ENCODE measurements at regions of chr20 and their contacts with region 1.

Region 1: DNA sequence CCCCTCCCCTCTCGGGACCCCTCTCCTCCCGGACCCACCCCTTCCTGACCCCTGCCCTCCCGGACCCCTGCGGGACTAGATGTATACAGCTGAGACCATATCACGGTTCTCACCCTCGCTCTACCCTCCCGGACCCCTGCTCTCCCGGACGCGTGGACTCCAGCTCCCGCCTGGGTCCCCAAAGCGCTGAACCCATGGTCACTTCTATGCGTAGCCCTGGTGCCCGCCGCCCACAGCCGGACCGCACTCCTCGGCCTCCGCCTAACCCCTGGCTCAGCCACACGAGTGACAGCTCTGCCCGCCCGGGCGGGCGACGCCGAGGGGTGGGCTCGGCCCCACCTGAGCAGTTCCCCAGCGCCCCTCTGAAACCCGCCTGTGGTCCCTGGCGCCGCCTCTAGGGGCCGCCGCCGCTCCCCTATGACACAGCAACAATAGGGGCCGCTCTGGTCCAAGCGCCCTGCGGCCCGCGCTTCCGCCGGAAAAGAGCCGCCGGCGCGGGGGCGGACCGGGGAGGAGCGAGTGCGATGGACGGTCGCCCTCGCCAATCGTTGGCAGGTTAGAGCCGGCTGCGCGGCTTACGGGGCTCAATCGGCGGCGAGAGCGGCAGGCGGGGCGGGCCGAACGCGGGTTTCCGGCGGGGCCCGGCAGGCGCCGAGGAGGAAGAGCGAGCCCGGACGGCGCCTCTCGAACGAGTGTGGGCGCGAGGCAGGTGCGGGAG is at the start of gene ADRM1:
- DNase-seq: peak; percentile 97
- H3K4me3 Mint-ChIP-seq: peak within 1 kb of the TSS; percentile 98
- H3K27ac Mint-ChIP-seq: peak within 1 kb of the TSS; percentile 100
- H3K4me1 Mint-ChIP-seq: peaks cover 28% of the 10 kb centered on the region
- H3K27me3 Mint-ChIP-seq: no peaks in the 10 kb centered on the region
- total RNA-seq, gene ADRM1: 181 and 188 TPM in 2 replicates

Region 2: DNA sequence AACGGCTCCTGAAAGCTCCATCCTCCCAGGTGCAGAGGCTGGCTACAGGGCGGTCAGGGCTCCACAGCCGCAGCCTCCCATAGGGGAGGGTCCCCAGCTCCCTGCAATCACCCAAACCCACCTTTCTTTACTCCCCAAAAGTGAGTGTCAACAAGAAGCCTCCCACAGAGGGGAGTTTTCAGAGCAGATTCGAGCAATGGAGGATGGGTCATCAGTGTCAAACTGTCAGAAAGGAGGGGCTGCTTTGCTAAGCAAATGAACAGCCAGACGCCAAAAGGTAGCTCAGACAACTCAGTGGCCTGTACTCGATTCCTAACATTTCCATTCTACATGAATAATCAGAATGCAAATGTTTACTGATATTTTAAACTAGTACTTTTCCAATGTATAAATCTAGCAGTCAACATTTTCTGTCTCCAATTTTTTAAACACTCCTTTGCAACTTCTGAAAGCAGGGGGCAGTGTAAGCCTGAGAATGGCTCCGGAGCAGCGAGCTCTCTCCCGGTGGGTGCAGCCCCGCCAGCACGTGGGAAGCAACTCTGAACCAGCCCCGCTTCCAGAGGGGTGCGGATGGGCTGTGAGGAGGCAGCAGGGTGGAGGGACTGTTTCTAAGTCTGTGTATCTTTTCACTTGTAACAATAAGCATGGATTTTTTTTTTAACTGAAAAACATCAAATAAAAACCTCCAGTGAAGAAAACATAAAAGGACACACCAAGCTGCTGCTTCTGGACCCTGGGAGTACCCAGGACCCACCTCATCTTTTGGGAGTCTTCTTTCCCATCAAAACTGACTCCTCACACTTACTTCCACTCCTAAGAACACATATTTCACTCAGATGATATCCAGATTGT is 291.7 kb before region 1 on chr20:
- intact Hi-C with region 1: loop called (anchors 5 kb)
- DNase-seq: peak; percentile 34
- H3K4me3 Mint-ChIP-seq: no peak overlapping the region
- H3K27ac Mint-ChIP-seq: no peak overlapping the region
- H3K4me1 Mint-ChIP-seq: peaks cover 8% of the 10 kb centered on the region
- H3K27me3 Mint-ChIP-seq: no peaks in the 10 kb centered on the region

Region 3: GRCh38 chr20:62143118-62143973 is 159.2 kb before region 1 on chr20 and contains the starts of genes PSMA7 and SS18L1:
- intact Hi-C with region 1: loop called (anchors 2 kb)
- DNase-seq: peak; percentile 84
- H3K4me3 Mint-ChIP-seq: peak within 1 kb of the TSS; percentile 90
- H3K27ac Mint-ChIP-seq: peak within 1 kb of the TSS; percentile 91
- H3K4me1 Mint-ChIP-seq: peaks cover 39% of the 10 kb centered on the region
- H3K27me3 Mint-ChIP-seq: no peaks in the 10 kb centered on the region
- total RNA-seq, gene PSMA7: 444 and 450 TPM in 2 replicates
- total RNA-seq, gene SS18L1: 24.3 and 29.4 TPM in 2 replicates

Region 4: DNA sequence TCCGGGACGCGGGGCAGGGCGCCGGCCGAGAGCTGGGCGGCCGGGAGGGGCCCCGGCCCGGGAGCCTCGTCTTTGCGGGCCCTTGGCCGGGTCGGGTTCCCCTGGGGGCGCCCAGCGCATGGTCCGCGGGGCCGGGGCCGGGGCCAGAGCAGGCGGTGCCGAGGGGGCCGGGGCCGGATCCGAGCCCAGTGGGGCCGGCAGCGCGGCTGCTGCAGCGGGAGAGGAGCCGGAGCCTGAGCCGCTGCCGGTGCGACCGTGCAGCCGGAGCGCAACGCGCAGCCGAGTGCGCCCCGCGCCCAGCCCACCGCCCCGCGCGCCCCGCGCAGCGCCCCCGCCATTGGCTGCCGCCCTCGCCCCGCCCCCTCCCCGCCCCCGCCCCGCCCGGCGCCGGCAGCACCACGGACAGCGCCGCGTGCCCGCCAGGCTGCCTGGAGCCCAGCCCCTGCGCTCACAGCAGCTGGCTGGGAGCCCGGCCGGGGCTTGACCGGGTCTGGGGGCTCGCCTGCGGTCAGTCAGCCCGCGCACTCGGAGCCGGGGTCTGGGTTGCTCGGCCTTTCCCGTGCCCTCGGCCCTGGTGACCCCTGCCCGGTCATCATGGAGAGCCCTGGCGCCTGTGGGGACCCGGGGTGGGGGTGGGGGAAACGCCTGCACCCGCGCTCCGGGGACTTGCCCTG is 82.4 kb before region 1 on chr20 and contains the start of gene HRH3:
- intact Hi-C with region 1: no loop called
- DNase-seq: peak; percentile 47
- H3K4me3 Mint-ChIP-seq: peak within 1 kb of the TSS; percentile 15
- H3K27ac Mint-ChIP-seq: no peak within 1 kb of the TSS
- H3K4me1 Mint-ChIP-seq: no peaks in the 10 kb centered on the region
- H3K27me3 Mint-ChIP-seq: peaks cover 20% of the 10 kb centered on the region
- total RNA-seq, gene HRH3: not detected in 2 replicates

Region 5: GRCh38 chr20:62321521-62321948 is 19.0 kb after region 1 on chr20:
- intact Hi-C with region 1: loop called (anchors 1 kb)
- DNase-seq: no peak
- H3K4me3 Mint-ChIP-seq: no peak overlapping the region
- H3K27ac Mint-ChIP-seq: no peak overlapping the region
- H3K4me1 Mint-ChIP-seq: no peaks in the 10 kb centered on the region
- H3K27me3 Mint-ChIP-seq: no peaks in the 10 kb centered on the region

Region 6: DNA sequence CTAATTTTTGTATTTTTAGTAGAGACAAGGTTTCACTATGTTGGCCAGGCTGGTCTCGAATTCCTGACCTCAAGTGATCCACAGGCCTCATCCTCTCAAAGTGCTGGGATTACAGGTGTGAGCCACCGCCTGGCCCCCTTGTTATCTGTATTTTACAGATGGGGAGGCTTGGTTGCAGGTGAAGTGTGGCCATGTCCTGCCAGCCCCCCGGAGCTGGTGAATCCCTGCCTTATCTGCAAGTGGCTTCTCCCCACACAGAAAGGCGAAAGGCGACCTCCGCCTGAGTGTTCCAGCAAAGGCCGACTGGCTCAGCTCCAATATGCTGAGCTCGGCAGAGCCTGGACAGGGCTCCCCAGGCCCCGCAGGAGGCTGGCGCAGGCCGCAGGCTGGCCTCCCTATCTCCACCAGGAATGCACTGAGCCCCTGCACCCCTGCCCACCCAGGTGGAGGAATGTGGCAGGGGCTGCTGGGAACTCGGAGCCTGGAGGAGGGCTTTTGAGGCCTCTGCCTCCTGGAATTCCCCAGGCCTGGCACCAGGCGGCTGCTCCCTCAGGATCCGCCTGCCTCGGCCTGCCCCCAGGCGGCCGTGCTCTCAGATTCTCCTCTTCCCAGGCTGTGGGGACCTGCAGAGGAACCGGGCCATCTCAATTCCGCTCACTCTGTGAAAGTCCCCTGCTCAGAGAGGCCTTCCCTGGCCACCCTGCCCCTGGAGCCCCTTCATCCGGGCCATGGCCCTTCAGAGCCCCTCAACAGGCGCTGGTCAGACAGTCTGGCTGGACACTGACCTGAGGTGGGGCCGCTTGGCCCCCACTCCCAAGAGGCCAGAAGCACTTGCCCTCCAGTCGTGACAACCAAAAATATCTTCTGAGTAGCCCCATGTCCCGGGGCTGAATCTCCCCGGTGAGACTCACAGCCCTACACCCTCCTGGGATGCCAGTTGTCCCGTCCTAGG is 73.9 kb after region 1 on chr20:
- intact Hi-C with region 1: no loop called
- DNase-seq: no peak
- H3K4me3 Mint-ChIP-seq: no peak overlapping the region
- H3K27ac Mint-ChIP-seq: no peak overlapping the region
- H3K4me1 Mint-ChIP-seq: no peaks in the 10 kb centered on the region
- H3K27me3 Mint-ChIP-seq: peaks cover 4% of the 10 kb centered on the region

Region 7: DNA sequence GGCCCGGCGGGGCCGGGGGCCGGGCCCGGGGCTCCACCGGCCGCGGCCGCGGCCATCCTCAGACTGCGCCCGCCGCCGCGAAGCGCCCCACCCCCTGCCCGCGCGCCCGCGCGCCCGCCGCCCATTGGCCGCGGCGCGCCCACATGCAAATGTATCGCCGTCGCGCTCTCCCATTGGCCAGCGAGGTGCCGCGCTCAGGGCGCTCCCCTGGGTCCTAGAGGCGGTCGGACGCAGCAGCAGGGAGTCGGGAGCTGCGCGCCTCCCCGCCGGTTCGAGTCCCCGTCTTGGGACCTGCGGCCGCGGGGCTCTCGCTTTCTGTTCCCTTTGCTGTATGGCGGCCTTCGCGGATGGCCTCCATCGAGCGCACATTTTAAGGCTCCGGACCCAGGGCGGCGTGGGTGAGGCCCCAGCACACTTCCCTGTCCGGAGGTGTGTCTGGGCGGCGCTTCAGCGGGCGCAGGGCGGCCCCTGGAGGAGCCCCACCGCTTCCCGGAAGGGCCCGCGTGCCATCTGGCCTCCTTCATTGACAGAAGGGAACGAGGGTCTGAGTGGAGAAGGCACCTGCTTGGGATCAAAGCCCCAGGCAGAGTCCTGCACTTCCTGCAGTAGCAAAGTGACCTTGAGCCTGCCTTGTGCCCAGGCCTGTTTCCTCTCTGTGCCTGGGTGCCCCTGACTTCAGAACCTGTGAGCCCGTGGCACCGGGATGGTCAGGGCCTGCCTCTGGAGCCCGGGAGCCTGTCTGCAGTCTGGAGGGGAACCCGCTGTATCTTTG is 104.9 kb after region 1 on chr20 and contains the start of gene CABLES2:
- intact Hi-C with region 1: loop called (anchors 1 kb)
- DNase-seq: peak; percentile 90
- H3K4me3 Mint-ChIP-seq: peak within 1 kb of the TSS; percentile 85
- H3K27ac Mint-ChIP-seq: peak within 1 kb of the TSS; percentile 87
- H3K4me1 Mint-ChIP-seq: peaks cover 10% of the 10 kb centered on the region
- H3K27me3 Mint-ChIP-seq: no peaks in the 10 kb centered on the region
- total RNA-seq, gene CABLES2: 12.9 and 15.7 TPM in 2 replicates

Region 8: GRCh38 chr20:62642040-62642665 is 339.7 kb after region 1 on chr20 and contains the start of gene SLCO4A1:
- intact Hi-C with region 1: loop called (anchors 2 kb)
- DNase-seq: peak; percentile 90
- H3K4me3 Mint-ChIP-seq: peak within 1 kb of the TSS; percentile 85
- H3K27ac Mint-ChIP-seq: peak within 1 kb of the TSS; percentile 78
- H3K4me1 Mint-ChIP-seq: peaks cover 16% of the 10 kb centered on the region
- H3K27me3 Mint-ChIP-seq: peaks cover 16% of the 10 kb centered on the region
- total RNA-seq, gene SLCO4A1: 47.6 and 49.8 TPM in 2 replicates

Region 9: GRCh38 chr20:62937366-62938104 is 635.0 kb after region 1 on chr20:
- intact Hi-C with region 1: loop called (anchors 1 kb)
- DNase-seq: peak; percentile 96
- H3K4me3 Mint-ChIP-seq: peak overlapping the region; percentile 88
- H3K27ac Mint-ChIP-seq: peak overlapping the region; percentile 98
- H3K4me1 Mint-ChIP-seq: peaks cover 41% of the 10 kb centered on the region
- H3K27me3 Mint-ChIP-seq: no peaks in the 10 kb centered on the region